Activated naive CD8-positive, alpha-beta T cell treated with anti-CD3 and anti-CD28 coated beads, Interleukin-2, amount 10 ng/mL, durations not matched to agents 7 days and 5 days (primary cell): ENCODE measurements at regions of chr2 and their contacts with region 1.

Region 1: GRCh38 chr2:73970850-73971471 is 13.7 kb upstream of the TET3 start:
- DNase-seq: peak; percentile 59
- ATAC-seq: peak; percentile 82
- H3K4me3 Mint-ChIP-seq: peak overlapping the region; percentile 80
- H3K27ac Mint-ChIP-seq: peak overlapping the region; percentile 93
- H3K4me1 Mint-ChIP-seq: peaks cover 53% of the 10 kb centered on the region
- H3K27me3 Mint-ChIP-seq: no peaks in the 10 kb centered on the region

Region 2: DNA sequence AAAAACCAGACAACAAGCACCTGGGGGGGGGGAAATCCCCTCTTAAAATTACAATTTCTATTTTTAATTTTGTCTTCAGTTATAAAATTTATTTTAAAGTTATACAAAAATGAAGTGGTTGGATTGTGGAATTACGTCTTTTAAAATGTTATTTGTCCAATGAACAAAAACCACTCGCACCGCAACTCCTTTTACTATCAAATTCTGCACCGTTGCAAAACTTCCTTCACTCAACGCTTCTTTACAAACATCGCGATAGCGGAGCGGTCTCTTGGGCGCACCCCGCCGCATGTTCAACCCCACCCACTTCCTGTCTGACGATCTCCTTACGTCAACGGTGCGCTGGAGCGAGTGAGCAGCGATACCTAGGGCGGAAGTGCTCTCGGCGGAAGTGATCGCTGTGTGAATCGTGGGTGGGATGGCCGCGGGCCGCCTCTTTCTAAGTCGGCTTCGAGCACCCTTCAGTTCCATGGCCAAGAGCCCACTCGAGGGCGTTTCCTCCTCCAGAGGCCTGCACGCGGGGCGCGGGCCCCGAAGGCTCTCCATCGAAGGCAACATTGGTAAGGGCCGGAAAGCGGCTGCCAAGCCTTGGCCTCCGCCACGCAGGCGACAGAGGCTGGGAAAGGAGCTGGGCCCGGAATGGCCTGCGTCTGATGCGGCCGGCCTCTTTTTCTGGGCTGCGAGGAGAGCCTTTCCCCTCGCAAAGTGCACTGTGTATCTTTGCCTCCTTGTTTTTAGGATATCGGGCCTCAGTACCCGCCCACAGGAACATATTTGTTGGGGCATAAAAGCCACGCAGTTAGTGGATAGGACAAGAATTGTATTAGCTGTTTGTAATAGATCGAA is 44.2 kb before region 1 on chr2 and contains the start of gene DGUOK:
- POLR2A ChIA-PET with region 1: interaction called, 16 read pairs
- DNase-seq: peak; percentile 90
- ATAC-seq: peak; percentile 99
- H3K4me3 Mint-ChIP-seq: peak within 1 kb of the TSS; percentile 90
- H3K27ac Mint-ChIP-seq: peak within 1 kb of the TSS; percentile 97
- H3K4me1 Mint-ChIP-seq: peaks cover 52% of the 10 kb centered on the region
- H3K27me3 Mint-ChIP-seq: no peaks in the 10 kb centered on the region
- total RNA-seq, gene DGUOK: 71.6 to 77.7 TPM

Region 3: DNA sequence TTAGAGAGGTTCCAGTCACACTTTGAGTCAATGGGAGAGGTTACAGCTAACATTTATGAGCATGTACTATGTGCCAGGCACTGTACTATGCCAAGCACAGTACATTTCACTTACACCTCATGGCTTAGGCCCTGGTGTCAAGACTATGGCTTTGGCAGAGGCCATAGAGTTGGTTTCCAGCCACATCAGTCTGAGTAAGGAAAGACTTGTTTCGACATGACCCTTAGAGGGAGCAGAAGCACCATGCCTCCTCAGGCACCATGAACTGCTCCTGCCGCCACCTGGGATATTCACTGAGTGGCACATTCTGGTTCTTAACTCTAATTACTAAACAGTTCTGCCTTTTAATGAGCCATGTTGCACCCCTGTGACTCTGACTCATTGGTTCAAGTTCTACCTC is 31.5 kb before region 1 on chr2:
- POLR2A ChIA-PET with region 1: interaction called, 10 read pairs
- DNase-seq: no peak
- ATAC-seq: peak; percentile 68
- H3K4me3 Mint-ChIP-seq: no peak overlapping the region
- H3K27ac Mint-ChIP-seq: peak overlapping the region; percentile 11
- H3K4me1 Mint-ChIP-seq: peaks cover 51% of the 10 kb centered on the region
- H3K27me3 Mint-ChIP-seq: no peaks in the 10 kb centered on the region

Region 4: DNA sequence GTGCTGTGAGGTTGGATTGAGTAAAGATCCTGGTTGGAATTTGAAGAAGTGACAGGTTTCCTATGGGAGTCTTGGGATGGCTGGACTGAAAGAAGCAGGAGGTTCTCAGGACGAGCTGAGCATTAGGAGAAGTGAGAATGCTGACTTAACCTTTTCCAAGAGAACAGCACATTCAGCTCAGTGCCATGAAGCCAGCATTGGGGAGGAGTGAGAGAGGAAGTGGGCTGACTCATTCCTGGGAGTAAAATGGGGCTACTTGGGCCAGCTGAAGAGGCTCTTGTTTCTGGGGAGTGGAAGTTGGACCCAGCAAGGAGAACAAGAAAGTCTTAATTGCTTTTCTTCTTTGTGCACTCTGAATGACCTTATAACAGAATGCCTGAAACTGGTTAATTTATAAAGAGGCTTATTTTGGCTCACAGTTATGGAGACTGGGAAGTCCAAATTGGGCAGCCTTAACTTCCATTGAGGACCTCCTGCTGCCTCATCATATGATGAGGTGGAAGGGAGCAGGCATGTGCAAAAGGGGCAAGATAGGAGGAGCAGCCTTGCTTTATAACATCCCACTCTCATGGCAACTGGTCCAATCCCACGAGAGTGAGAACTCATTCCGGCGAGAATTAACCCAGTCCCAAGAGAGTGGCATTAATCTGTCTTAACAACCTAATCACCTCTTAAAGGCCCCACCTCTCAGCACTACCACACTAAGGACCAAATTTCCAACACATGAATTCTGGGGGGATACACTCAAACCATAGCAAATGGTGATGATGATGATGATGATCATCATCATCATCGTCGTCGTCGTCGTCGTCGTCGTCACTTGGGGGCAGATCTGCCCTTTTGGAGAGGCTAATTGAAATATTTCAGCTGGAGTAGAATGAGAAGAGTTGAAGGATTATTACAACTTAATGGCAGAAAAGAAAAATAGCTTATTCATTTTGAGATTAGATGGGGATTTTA is 18.2 kb before region 1 on chr2:
- POLR2A ChIA-PET with region 1: no interaction called
- DNase-seq: no peak
- ATAC-seq: no peak
- H3K4me3 Mint-ChIP-seq: no peak overlapping the region
- H3K27ac Mint-ChIP-seq: peak overlapping the region; percentile 63
- H3K4me1 Mint-ChIP-seq: peaks cover 39% of the 10 kb centered on the region
- H3K27me3 Mint-ChIP-seq: no peaks in the 10 kb centered on the region

Region 5: GRCh38 chr2:73985308-73986084 is 14.5 kb after region 1 on chr2:
- POLR2A ChIA-PET with region 1: interaction called, 40 read pairs
- DNase-seq: peak; percentile 74
- ATAC-seq: peak; percentile 32
- H3K4me3 Mint-ChIP-seq: peak overlapping the region; percentile 83
- H3K27ac Mint-ChIP-seq: peak overlapping the region; percentile 91
- H3K4me1 Mint-ChIP-seq: peaks cover 63% of the 10 kb centered on the region
- H3K27me3 Mint-ChIP-seq: no peaks in the 10 kb centered on the region

Region 6: GRCh38 chr2:74010087-74010661 is 39.2 kb after region 1 on chr2:
- POLR2A ChIA-PET with region 1: no interaction called
- DNase-seq: no peak
- ATAC-seq: no peak
- H3K4me3 Mint-ChIP-seq: no peak overlapping the region
- H3K27ac Mint-ChIP-seq: no peak overlapping the region
- H3K4me1 Mint-ChIP-seq: peaks cover 19% of the 10 kb centered on the region
- H3K27me3 Mint-ChIP-seq: no peaks in the 10 kb centered on the region

Region 7: GRCh38 chr2:74059137-74059775 is 88.3 kb after region 1 on chr2:
- POLR2A ChIA-PET with region 1: no interaction called
- DNase-seq: no peak
- ATAC-seq: no peak
- H3K4me3 Mint-ChIP-seq: no peak overlapping the region
- H3K27ac Mint-ChIP-seq: no peak overlapping the region
- H3K4me1 Mint-ChIP-seq: peaks cover 2% of the 10 kb centered on the region
- H3K27me3 Mint-ChIP-seq: no peaks in the 10 kb centered on the region